GM12878 (cell line): ENCODE measurements at regions of chr11 and their contacts with region 1.

Region 1: DNA sequence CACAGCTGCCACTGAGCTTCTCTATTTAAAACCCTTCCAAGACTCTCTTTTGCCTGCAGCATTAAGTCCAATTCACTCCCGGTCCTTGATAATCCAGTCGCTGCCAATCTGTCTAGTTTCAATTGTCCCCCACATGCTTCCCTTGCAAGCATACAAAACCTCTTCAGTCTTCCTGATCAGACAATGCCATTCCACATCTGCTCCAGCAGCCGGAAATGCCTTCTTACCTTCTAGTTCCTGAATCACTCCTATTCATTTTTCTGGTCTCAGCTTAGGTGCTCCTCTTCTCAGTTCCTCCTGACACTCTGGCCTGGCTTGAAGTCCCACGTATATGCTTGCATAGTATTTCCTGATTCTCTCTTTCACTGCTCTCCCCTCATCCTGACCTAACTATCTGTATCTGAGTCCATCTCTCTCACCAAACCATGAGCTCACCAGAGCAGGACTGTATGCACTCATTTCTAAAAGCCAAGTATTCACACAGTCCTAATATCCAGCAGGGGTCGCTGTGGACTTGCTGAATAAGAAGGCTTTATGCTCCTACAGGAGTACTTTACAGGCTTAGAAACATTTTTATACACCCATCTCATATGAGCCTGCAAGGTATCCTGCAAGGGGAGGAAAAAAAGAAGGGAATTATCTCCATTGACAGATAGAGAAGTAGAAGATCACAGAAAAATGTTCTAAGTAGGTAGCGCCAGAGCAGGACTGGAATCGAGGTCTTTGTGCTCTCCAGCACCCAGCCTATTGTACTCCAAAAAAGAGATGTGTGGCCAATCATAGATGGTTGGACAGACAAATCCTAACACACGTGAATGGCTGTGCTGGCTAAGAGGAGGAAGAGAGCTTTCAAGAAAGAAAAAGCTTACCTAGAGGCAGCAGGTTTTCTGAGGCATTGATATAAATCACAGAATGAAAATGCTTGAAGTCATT is 19.2 kb downstream of the XRRA1 start:
- DNase-seq: peak; percentile 49
- ATAC-seq: peak; percentile 100
- H3K4me3 ChIP-seq: no peak overlapping the region
- H3K27ac ChIP-seq: no peak overlapping the region
- H3K4me1 ChIP-seq: no peaks in the 10 kb centered on the region
- H3K27me3 ChIP-seq: no peaks in the 10 kb centered on the region
- CTCF ChIP-seq: peak; percentile 75 to 95 (median 90)
- EP300 ChIP-seq: no peak
- POLR2A ChIP-seq: no peak
- RAD21 ChIP-seq: peak; percentile 95

Region 2: DNA sequence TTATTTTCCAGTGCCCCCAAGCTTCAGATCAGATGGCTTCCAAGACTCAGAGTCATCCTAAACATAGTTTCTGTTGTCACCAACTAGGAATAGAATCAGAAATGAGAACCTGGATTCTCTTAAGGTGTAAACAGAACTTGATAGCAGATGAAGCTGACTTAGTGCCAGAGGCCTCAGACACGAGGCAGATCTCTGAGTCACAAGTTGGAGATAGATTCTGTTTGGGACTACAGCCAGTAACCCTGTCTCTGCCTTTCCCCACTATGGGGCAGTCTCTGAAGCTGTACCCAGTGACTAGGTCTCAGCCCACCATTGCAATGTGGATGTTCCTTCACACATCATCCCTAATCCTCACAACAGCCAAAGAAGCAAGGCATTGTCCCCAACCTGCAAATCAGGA is 84.4 kb after region 1 on chr11:
- CTCF ChIA-PET with region 1: interaction called, 14 read pairs
- POLR2A ChIA-PET with region 1: no interaction called
- RAD21 ChIA-PET with region 1: interaction called, 4 read pairs
- SMC1A ChIA-PET with region 1: interaction called, 4 read pairs
- in situ Hi-C with region 1: no loop called
- intact Hi-C with region 1: no loop called
- DNase-seq: no peak
- ATAC-seq: no peak
- H3K4me3 ChIP-seq: no peak overlapping the region
- H3K27ac ChIP-seq: no peak overlapping the region
- H3K4me1 ChIP-seq: no peaks in the 10 kb centered on the region
- H3K27me3 ChIP-seq: no peaks in the 10 kb centered on the region
- CTCF ChIP-seq: no peak
- EP300 ChIP-seq: no peak
- POLR2A ChIP-seq: no peak
- RAD21 ChIP-seq: no peak

Region 3: GRCh38 chr11:75031771-75032549 is 102.3 kb after region 1 on chr11:
- CTCF ChIA-PET with region 1: interaction called, 77 read pairs
- POLR2A ChIA-PET with region 1: no interaction called
- RAD21 ChIA-PET with region 1: interaction called, 12 read pairs
- SMC1A ChIA-PET with region 1: interaction called, 15 read pairs
- in situ Hi-C with region 1: loop called (anchors 5 kb)
- intact Hi-C with region 1: loop called (anchors 1 kb)
- DNase-seq: no peak
- ATAC-seq: peak; percentile 88
- H3K4me3 ChIP-seq: no peak overlapping the region
- H3K27ac ChIP-seq: no peak overlapping the region
- H3K4me1 ChIP-seq: peaks cover 10% of the 10 kb centered on the region; the same call in 1 of the 2 replicates
- H3K27me3 ChIP-seq: no peaks in the 10 kb centered on the region
- CTCF ChIP-seq: peak; percentile 78 to 86 (median 79)
- EP300 ChIP-seq: no peak
- POLR2A ChIP-seq: no peak
- RAD21 ChIP-seq: peak; percentile 66

Region 4: GRCh38 chr11:75132080-75132479 is 202.4 kb after region 1 on chr11:
- CTCF ChIA-PET with region 1: no interaction called
- POLR2A ChIA-PET with region 1: no interaction called
- RAD21 ChIA-PET with region 1: no interaction called
- SMC1A ChIA-PET with region 1: no interaction called
- in situ Hi-C with region 1: no loop called
- intact Hi-C with region 1: no loop called
- DNase-seq: no peak
- ATAC-seq: no peak
- H3K4me3 ChIP-seq: no peak overlapping the region
- H3K27ac ChIP-seq: no peak overlapping the region
- H3K4me1 ChIP-seq: no peaks in the 10 kb centered on the region
- H3K27me3 ChIP-seq: no peaks in the 10 kb centered on the region; a peak in 1 of 4 replicates
- CTCF ChIP-seq: no peak
- EP300 ChIP-seq: no peak
- POLR2A ChIP-seq: no peak
- RAD21 ChIP-seq: no peak

Region 5: GRCh38 chr11:75142714-75143419 is 213.2 kb after region 1 on chr11:
- CTCF ChIA-PET with region 1: interaction called, 23 read pairs
- POLR2A ChIA-PET with region 1: no interaction called
- RAD21 ChIA-PET with region 1: interaction called, 8 read pairs
- SMC1A ChIA-PET with region 1: interaction called, 8 read pairs
- in situ Hi-C with region 1: no loop called
- intact Hi-C with region 1: loop called (anchors 2 kb)
- DNase-seq: peak; percentile 55
- ATAC-seq: peak; percentile 78
- H3K4me3 ChIP-seq: no peak overlapping the region
- H3K27ac ChIP-seq: no peak overlapping the region
- H3K4me1 ChIP-seq: peaks cover 24% of the 10 kb centered on the region
- H3K27me3 ChIP-seq: no peaks in the 10 kb centered on the region
- CTCF ChIP-seq: no peak
- EP300 ChIP-seq: no peak
- POLR2A ChIP-seq: no peak
- RAD21 ChIP-seq: no peak